ENCODE measurements at regions of chr6 and their contacts with region 1.

Region 1: GRCh38 chr6:3281631-3282475 is 23.1 kb downstream of the PSMG4 start:
- DNase-seq: peak in 1 of 2 donors; percentile 68
- H3K4me3 ChIP-seq: no peak overlapping the region
- H3K27ac ChIP-seq: peak overlapping the region; percentile 43 to 55
- H3K4me1 ChIP-seq: peaks cover 10 to 15% of the 10 kb centered on the region in 2 donors
- H3K27me3 ChIP-seq: no peaks in the 10 kb centered on the region
- CTCF ChIP-seq: no peak

Region 2: DNA sequence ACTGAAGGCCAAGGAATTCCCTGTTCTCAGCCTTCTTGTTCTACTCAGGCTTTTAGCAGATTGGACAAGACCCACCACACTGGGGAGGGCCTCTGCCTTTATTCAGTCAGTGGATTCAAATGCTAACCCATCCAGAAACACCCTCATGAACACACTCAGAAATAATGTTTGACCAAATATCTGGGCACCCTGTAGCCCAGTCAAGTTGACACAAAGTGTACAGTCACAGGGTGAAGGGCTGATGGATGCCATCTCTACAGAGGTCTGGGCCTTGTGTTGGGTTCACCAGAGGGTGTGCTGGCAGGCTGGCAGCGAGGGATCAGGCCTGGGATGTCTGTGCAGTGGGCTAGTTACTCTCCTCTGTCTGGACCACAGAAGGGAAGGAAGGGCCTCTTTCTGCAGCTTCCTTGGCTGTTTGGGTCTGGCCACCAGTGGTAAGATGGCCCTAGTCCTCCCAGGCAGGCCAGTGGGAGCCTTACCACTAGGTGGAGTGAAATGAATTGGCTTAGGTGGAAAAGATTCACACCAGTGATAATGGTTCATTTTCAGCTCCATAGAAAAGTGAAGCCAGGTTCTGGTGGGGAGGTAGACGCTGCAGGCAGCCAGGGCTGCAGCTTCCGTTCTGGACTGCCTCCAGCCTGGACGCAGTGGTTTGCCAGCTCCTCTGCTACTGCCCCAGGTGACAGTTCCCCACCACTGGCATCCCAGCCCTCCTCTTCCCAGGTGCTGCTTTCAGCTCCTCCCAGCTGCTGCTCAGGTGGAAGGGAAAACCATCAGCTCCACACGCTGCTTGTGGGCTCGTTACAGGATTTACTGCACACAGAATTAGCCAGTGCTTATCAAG is 133.7 kb before region 1 on chr6:
- intact Hi-C with region 1: no loop called
- DNase-seq: no peak
- H3K4me3 ChIP-seq: no peak overlapping the region
- H3K27ac ChIP-seq: no peak overlapping the region
- H3K4me1 ChIP-seq: no peaks in the 10 kb centered on the region
- H3K27me3 ChIP-seq: no peaks in the 10 kb centered on the region
- CTCF ChIP-seq: no peak

Region 3: GRCh38 chr6:3410385-3411360 is 128.8 kb after region 1 on chr6:
- intact Hi-C with region 1: loop called (anchors 5 kb)
- DNase-seq: peak in 1 of 2 donors; percentile 71
- H3K4me3 ChIP-seq: no peak overlapping the region
- H3K27ac ChIP-seq: no peak overlapping the region
- H3K4me1 ChIP-seq: peaks cover 0 to 2% of the 10 kb centered on the region in 2 donors
- H3K27me3 ChIP-seq: no peaks in the 10 kb centered on the region
- CTCF ChIP-seq: peak; percentile 56 to 74 (median 59)

Region 4: DNA sequence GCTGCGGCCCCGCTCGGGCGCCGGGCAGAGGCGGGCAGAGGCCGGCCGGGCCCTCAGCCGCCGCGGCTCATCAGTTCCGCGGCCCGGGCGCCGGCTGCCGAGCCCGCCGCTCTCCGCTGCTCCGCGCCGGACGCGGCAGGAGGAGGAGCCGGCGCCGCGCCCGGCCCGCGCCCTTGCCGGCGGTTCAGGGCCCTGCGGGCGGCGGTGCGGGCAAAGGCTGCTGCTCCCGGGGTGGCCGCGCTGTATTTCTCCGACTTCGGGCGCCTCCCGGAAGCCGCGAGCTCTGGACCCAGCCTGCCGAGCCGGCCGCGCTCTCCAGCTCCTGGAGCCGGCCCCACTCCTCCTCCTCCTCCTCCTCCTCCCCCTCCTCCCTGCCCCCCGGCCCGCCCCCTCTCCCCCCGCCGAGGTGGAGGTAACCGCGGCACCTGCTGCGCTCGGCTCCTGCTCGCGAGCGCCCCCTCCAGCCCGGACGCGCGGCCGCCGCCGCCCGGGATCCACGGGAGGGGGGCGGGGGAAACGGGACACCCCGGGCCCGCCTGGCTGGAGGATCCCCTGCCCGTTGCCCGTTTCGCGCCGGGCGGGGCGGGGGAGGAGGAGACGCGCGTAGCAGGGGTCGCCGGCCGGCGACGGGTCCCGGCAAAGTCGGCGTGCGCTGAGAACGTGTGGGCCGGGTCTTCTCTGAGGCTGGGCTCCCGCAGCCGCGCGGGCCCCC is 175.1 kb after region 1 on chr6 and contains the start of gene SLC22A23:
- intact Hi-C with region 1: loop called (anchors 5 kb)
- DNase-seq: peak in 1 of 2 donors; percentile 72
- H3K4me3 ChIP-seq: peak within 1 kb of the TSS; percentile 74 to 79
- H3K27ac ChIP-seq: peak within 1 kb of the TSS in 1 of 2 donors; percentile 37
- H3K4me1 ChIP-seq: peaks cover 5 to 8% of the 10 kb centered on the region in 2 donors
- H3K27me3 ChIP-seq: no peaks in the 10 kb centered on the region
- CTCF ChIP-seq: peak; percentile 36 to 92 (median 59)
- total RNA-seq, gene SLC22A23: 42.0 TPM

Region 5: GRCh38 chr6:3732345-3733141 is 450.7 kb after region 1 on chr6:
- intact Hi-C with region 1: loop called (anchors 1 kb)
- DNase-seq: peak in 1 of 2 donors; percentile 80
- H3K4me3 ChIP-seq: peak overlapping the region; percentile 18 to 38
- H3K27ac ChIP-seq: peak overlapping the region; percentile 28 to 48
- H3K4me1 ChIP-seq: peaks cover 17 to 79% of the 10 kb centered on the region in 2 donors
- H3K27me3 ChIP-seq: no peaks in the 10 kb centered on the region
- CTCF ChIP-seq: peak; percentile 80 to 86 (median 82)

Region 6: GRCh38 chr6:4008324-4009047 is 726.6 kb after region 1 on chr6:
- intact Hi-C with region 1: loop called (anchors 5 kb)
- DNase-seq: no peak
- H3K4me3 ChIP-seq: no peak overlapping the region
- H3K27ac ChIP-seq: peak overlapping the region; percentile 6 to 21
- H3K4me1 ChIP-seq: no peaks in the 10 kb centered on the region
- H3K27me3 ChIP-seq: no peaks in the 10 kb centered on the region
- CTCF ChIP-seq: peak; percentile 20 to 62 (median 50)

Region 7: DNA sequence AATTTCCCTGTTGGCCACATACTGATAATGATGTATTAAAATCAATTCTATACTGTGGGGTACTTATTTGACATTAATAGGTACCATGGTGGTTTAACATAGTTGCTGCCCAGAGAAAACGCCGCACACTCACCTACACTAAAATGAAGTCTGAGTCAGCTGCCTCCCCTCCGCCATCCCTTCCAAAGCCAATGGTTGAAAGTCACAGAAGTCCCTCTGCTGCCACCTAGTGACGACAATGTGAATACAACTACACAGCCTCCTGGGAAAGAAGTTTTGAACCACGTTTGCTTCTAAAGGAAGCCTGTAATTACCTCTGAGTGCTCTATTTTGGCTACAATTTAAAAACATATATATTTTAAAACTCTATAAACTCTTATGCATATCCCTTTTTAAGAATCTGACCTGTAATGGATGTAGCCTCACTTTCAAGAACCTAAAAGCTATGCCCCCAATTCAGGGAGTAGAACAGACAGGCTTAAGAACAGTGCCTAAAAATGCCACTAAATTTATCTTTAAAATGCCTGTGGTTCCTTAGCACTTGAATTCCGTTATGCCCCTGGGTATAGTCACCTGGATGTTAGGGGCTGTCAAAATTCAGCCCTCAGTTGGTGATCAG is 874.1 kb after region 1 on chr6:
- intact Hi-C with region 1: loop called (anchors 5 kb)
- DNase-seq: peak; percentile 24 to 90
- H3K4me3 ChIP-seq: no peak overlapping the region
- H3K27ac ChIP-seq: no peak overlapping the region
- H3K4me1 ChIP-seq: no peaks in the 10 kb centered on the region
- H3K27me3 ChIP-seq: no peaks in the 10 kb centered on the region
- CTCF ChIP-seq: peak; percentile 60 to 88 (median 75)